Caco-2 (cell line): ENCODE measurements at regions of chr11 and their contacts with region 1.

Region 1: DNA sequence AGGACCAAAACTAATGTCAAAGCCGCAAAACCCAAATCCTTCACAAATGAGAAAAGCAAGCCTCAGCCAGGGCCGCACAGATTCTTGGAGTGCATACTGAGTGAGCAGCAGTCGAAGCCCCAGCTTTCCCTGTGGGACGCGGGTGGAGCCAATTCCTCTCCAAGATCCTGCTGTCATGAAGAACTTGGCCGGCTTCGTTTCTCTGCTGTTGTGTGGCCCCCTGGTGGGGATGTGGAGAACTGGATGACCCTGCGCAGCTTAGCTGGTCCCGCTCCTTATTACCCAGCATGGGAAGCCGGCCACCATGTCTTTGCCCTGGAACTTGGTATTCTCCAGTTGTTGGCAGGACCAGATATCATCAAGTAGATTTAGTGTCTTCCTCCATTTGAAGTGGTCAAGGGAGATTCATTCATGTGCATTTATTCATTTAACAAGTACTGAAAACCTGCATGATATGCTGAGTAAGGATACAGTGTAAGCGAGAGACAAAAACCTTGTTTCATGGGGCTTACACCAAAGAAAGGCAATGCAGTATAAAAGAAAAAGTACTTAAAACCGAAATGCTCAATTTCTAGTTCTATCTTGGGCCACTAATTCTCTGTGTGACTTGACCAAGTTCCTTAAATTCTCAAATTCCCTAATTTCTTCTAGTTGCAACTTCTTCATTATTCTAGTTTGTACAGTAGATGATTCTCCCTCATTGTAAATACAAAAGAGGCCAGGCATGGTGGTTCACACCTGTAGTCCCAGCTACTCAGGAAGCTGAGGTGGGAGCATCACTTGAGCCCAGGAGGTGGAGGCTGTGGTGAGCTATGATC is 56.7 kb upstream of the CRTAM start:
- DNase-seq: peak; percentile 89 to 94
- H3K4me3 ChIP-seq: no peak overlapping the region
- H3K4me3 Mint-ChIP-seq: no peak overlapping the region
- H3K27ac Mint-ChIP-seq: no peak overlapping the region
- H3K4me1 ChIP-seq: peaks cover 19% of the 10 kb centered on the region
- H3K4me1 Mint-ChIP-seq: peaks cover 27% of the 10 kb centered on the region
- H3K27me3 ChIP-seq: no peaks in the 10 kb centered on the region
- H3K27me3 Mint-ChIP-seq: no peaks in the 10 kb centered on the region
- CTCF ChIP-seq: peak; percentile 99

Region 2: GRCh38 chr11:122405547-122406341 is 375.8 kb before region 1 on chr11:
- CTCF ChIA-PET with region 1: no interaction called
- POLR2A ChIA-PET with region 1: no interaction called
- intact Hi-C with region 1: no loop called
- DNase-seq: no peak
- H3K4me3 ChIP-seq: no peak overlapping the region
- H3K4me3 Mint-ChIP-seq: no peak overlapping the region
- H3K27ac Mint-ChIP-seq: no peak overlapping the region
- H3K4me1 ChIP-seq: no peaks in the 10 kb centered on the region
- H3K4me1 Mint-ChIP-seq: no peaks in the 10 kb centered on the region
- H3K27me3 ChIP-seq: no peaks in the 10 kb centered on the region
- H3K27me3 Mint-ChIP-seq: peaks cover 9% of the 10 kb centered on the region
- CTCF ChIP-seq: no peak

Region 3: GRCh38 chr11:122578168-122578825 is 203.3 kb before region 1 on chr11:
- CTCF ChIA-PET with region 1: interaction called, 7 read pairs
- POLR2A ChIA-PET with region 1: no interaction called
- intact Hi-C with region 1: loop called (anchors 1 kb)
- DNase-seq: no peak
- H3K4me3 ChIP-seq: no peak overlapping the region
- H3K4me3 Mint-ChIP-seq: no peak overlapping the region
- H3K27ac Mint-ChIP-seq: no peak overlapping the region
- H3K4me1 ChIP-seq: no peaks in the 10 kb centered on the region
- H3K4me1 Mint-ChIP-seq: peaks cover 7% of the 10 kb centered on the region
- H3K27me3 ChIP-seq: no peaks in the 10 kb centered on the region
- H3K27me3 Mint-ChIP-seq: peaks cover 12% of the 10 kb centered on the region
- CTCF ChIP-seq: no peak

Region 4: DNA sequence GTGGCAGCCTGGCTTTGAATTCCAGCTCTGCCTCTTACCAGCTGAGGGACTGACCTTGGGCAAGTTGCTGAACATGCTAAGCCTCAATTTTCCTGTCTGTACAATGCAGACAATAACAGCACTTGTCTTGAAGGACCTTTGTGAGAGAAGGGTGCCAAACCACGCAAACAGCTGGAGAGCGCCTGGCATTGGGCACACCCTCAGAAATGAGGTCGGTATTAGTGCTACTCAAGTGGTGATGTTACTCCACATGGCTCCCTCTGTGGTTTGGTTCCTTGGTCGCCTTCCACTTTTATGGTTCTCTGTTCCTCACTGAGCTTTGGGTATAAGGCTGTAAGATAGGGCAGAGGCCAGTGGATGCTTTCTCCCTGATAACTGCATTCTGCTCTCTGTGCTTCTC is 117.8 kb before region 1 on chr11:
- CTCF ChIA-PET with region 1: interaction called, 11 read pairs
- POLR2A ChIA-PET with region 1: no interaction called
- intact Hi-C with region 1: loop called (anchors 1 kb)
- DNase-seq: no peak
- H3K4me3 ChIP-seq: no peak overlapping the region
- H3K4me3 Mint-ChIP-seq: no peak overlapping the region
- H3K27ac Mint-ChIP-seq: no peak overlapping the region
- H3K4me1 ChIP-seq: peaks cover 18% of the 10 kb centered on the region
- H3K4me1 Mint-ChIP-seq: peaks cover 13% of the 10 kb centered on the region
- H3K27me3 ChIP-seq: no peaks in the 10 kb centered on the region
- H3K27me3 Mint-ChIP-seq: no peaks in the 10 kb centered on the region
- CTCF ChIP-seq: no peak

Region 5: GRCh38 chr11:122747351-122747781 is 34.2 kb before region 1 on chr11:
- CTCF ChIA-PET with region 1: interaction called, 10 read pairs
- POLR2A ChIA-PET with region 1: no interaction called
- intact Hi-C with region 1: no loop called
- DNase-seq: no peak
- H3K4me3 ChIP-seq: no peak overlapping the region
- H3K4me3 Mint-ChIP-seq: no peak overlapping the region
- H3K27ac Mint-ChIP-seq: no peak overlapping the region
- H3K4me1 ChIP-seq: peaks cover 5% of the 10 kb centered on the region; the same call in 1 of the 2 replicates
- H3K4me1 Mint-ChIP-seq: peaks cover 16% of the 10 kb centered on the region
- H3K27me3 ChIP-seq: no peaks in the 10 kb centered on the region
- H3K27me3 Mint-ChIP-seq: no peaks in the 10 kb centered on the region
- CTCF ChIP-seq: no peak

Region 6: DNA sequence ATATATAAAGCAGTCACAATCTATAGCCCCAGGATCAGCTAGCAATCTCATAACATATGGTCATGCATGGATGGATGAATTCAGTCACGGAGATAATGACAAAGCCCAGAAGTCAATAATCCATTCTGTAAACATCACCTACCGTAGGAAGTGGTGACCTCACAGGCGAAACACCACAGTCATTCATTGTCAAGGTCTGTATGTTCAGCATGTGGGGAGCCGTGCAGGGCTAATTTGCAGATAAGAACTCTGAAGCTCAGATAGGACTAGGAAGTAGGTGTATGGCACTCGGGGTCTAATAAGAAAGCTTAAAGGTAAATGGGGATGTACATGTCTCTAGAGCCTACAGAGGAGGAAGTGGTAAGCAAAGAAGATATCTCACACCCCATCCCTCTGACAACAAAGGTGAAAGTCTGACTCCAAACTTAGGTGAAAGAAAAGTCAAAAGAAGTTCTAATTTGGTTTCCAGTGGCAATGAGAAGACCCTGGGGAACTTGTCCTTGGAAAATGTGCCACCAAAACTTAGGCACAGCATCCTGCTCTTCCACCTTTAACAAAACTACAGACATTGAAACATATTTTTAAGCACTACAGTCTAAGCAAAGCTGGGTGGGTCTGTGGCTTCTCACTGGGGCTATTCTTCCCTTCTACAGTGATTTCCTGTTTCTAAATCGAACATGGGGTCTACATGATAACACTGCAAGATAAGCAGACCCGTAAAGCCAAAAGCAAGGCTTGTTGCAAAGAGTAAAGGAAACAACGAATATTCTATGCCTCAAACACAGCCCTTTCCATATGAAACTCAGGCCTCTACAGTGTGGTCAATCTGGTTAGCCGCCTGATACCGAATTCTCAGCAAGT is 61.9 kb after region 1 on chr11:
- CTCF ChIA-PET with region 1: no interaction called
- POLR2A ChIA-PET with region 1: no interaction called
- intact Hi-C with region 1: loop called (anchors 2 kb)
- DNase-seq: no peak
- H3K4me3 ChIP-seq: no peak overlapping the region
- H3K4me3 Mint-ChIP-seq: no peak overlapping the region
- H3K27ac Mint-ChIP-seq: no peak overlapping the region
- H3K4me1 ChIP-seq: peaks cover 10% of the 10 kb centered on the region; the same call in 1 of the 2 replicates
- H3K4me1 Mint-ChIP-seq: peaks cover 7% of the 10 kb centered on the region
- H3K27me3 ChIP-seq: no peaks in the 10 kb centered on the region
- H3K27me3 Mint-ChIP-seq: peaks cover 9% of the 10 kb centered on the region
- CTCF ChIP-seq: no peak

Region 7: DNA sequence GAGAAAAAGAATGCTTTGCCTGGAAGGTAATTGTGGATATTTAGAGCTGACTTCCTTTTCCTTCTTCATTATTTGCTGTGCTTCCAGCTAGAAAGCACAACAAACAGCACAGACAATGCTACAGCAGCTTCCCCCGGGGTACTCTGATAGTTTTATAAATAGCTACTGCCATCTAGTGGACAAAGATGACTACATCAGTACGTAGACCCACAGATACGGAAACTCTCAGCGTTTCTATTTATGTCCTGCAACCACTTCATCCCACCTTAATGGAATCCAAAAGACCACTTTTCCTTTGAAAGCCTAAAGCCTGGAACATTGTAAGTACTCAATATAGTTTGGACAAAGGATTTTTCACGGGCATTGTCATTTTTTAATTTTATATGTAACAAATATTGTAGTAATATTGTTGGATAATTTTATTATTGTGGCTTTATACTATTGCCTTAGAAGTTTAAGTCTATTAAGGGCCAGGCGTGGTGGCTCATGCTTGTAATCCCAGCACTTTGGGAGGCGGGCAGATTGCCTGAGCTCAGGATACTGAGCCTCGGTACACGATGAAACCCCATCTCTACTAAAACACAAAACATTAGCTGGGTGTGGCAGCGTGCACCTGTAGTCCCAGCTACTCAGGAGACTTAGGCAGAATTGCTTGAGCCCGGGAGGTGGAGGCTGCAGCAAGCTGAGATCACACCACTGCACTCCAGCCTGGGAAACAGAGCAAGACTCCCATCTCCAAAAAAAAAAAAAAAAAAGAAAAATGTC is 272.9 kb after region 1 on chr11:
- CTCF ChIA-PET with region 1: interaction called, 3 read pairs
- POLR2A ChIA-PET with region 1: interaction called, 10 read pairs
- intact Hi-C with region 1: no loop called
- DNase-seq: peak; percentile 63 to 75
- H3K4me3 ChIP-seq: no peak overlapping the region
- H3K4me3 Mint-ChIP-seq: no peak overlapping the region
- H3K27ac Mint-ChIP-seq: peak overlapping the region; percentile 41
- H3K4me1 ChIP-seq: peaks cover 13% of the 10 kb centered on the region
- H3K4me1 Mint-ChIP-seq: peaks cover 17% of the 10 kb centered on the region
- H3K27me3 ChIP-seq: no peaks in the 10 kb centered on the region
- H3K27me3 Mint-ChIP-seq: no peaks in the 10 kb centered on the region
- CTCF ChIP-seq: peak; percentile 82 to 89